CD4-positive, alpha-beta memory T cell (primary cell): ENCODE measurements at regions of chr10 and their contacts with region 1.

Region 1: DNA sequence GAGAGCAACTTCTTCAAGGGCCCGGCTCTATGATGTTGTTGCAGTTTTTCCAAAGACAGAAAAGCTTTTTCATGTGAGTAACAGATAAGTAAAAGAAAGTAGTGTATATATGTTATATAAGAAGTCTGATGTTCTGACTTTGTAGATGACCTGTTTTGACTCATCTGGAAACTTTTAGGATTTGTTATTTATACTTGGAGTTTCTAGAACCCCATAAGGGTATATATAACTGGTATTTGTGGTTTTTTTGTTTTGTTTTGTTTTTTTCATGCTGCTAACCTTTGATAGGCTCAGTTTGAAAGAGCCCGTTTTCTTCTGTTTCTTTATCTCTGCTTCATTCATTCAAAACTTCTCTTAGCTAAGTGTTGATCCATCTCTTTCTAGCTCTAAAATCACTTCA is 7.3 kb downstream of the RPP30 start:
- DNase-seq: no peak
- H3K4me3 ChIP-seq: no peak overlapping the region
- H3K4me3 Mint-ChIP-seq: no peak overlapping the region
- H3K27ac ChIP-seq: no peak overlapping the region
- H3K27ac Mint-ChIP-seq: no peak overlapping the region
- H3K4me1 ChIP-seq: peaks cover 4% of the 10 kb centered on the region
- H3K4me1 Mint-ChIP-seq: peaks cover 0 to 7% (median 4%) of the 10 kb centered on the region in 4 donors
- H3K27me3 ChIP-seq: no peaks in the 10 kb centered on the region
- H3K27me3 Mint-ChIP-seq: no peaks in the 10 kb centered on the region

Region 2: DNA sequence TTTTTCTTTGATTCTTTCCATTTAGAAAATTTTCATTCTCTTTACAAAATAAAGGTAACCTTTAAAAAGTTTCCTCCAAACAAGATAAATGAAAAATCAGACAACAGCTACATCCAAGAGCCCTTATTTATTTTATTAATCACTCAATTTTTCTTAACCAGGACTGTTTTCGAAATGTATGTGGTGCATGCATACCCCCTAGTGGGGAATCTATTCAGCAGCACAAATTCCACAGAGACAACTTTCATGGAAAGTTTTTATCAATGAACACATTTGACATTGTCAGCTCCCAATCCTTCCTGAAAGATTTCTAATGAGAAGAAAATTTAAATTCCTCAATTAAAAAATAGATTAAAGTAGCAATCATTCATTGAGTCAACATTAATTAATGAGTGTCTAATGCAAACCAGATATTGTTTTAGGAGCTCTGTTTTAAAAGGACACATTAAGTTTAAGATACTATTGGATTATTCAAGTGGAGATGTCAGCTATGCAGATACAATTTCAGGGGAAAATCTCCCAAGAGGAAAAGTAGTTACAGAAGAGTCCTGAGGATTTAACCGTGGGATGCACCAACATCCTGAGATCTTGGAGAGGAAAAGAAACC is 16.1 kb before region 1 on chr10:
- CTCF ChIA-PET with region 1: interaction called, 19 read pairs
- POLR2A ChIA-PET with region 1: interaction called, 3 read pairs
- intact Hi-C with region 1: no loop called
- DNase-seq: peak in 3 of 5 donors; percentile 10 to 26 (median 14)
- H3K4me3 ChIP-seq: no peak overlapping the region
- H3K4me3 Mint-ChIP-seq: no peak overlapping the region
- H3K27ac ChIP-seq: no peak overlapping the region
- H3K27ac Mint-ChIP-seq: no peak overlapping the region
- H3K4me1 ChIP-seq: no peaks in the 10 kb centered on the region
- H3K4me1 Mint-ChIP-seq: peaks cover 0 to 6% (median 3%) of the 10 kb centered on the region in 4 donors
- H3K27me3 ChIP-seq: peaks cover 15% of the 10 kb centered on the region
- H3K27me3 Mint-ChIP-seq: peaks cover 21 to 29% of the 10 kb centered on the region in 2 donors

Region 3: GRCh38 chr10:90912174-90912573 is 33.1 kb after region 1 on chr10:
- CTCF ChIA-PET with region 1: interaction called, 10 read pairs
- POLR2A ChIA-PET with region 1: no interaction called
- intact Hi-C with region 1: no loop called
- DNase-seq: no peak
- H3K4me3 ChIP-seq: no peak overlapping the region
- H3K4me3 Mint-ChIP-seq: no peak overlapping the region
- H3K27ac ChIP-seq: no peak overlapping the region
- H3K27ac Mint-ChIP-seq: peak overlapping the region in 1 of 7 donors; percentile 61
- H3K4me1 ChIP-seq: no peaks in the 10 kb centered on the region
- H3K4me1 Mint-ChIP-seq: peaks cover 0 to 4% (median 2%) of the 10 kb centered on the region in 4 donors
- H3K27me3 ChIP-seq: no peaks in the 10 kb centered on the region
- H3K27me3 Mint-ChIP-seq: peaks cover 1 to 4% of the 10 kb centered on the region in 2 donors